Heart right ventricle (tissue), 16 donors: ENCODE measurements at regions of chr2 and their contacts with region 1.

Region 1: GRCh38 chr2:219218732-219219701 is at the start of gene ABCB6:
- DNase-seq: peak; percentile 97 to 98
- ATAC-seq: peak; percentile 90 to 93 (median 92)
- H3K4me3 ChIP-seq: peak within 1 kb of the TSS; percentile 30 to 75 (median 64)
- H3K27ac ChIP-seq: peak within 1 kb of the TSS; percentile 72 to 95 (median 90)
- H3K4me1 ChIP-seq: peaks cover 12 to 40% (median 34%) of the 10 kb centered on the region in 9 donors
- H3K27me3 ChIP-seq: no peaks in the 10 kb centered on the region
- CTCF ChIP-seq: no peak
- total RNA-seq, gene ABCB6: 9.8 to 31.0 (median 14.8) TPM

Region 2: DNA sequence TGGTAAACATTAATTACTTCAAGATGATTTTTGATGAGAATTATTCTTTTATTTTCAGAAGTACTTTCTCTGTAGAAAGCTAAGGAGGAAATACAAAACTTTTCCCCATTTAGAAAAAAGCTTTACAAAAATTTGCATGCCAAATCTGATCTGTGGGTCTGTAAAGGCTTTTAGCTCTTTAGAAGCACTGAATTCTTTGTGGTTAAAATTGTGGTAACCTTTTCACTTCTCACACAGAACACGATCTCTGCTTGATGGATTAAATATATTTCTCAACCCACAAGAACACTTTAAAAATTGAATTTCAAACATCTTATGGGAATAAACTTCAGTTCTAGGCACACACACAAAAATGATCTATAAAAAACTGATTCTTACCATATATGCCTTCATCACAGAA is 736.4 kb before region 1 on chr2:
- intact Hi-C with region 1: no loop called
- DNase-seq: no peak
- ATAC-seq: no peak
- H3K4me3 ChIP-seq: no peak overlapping the region
- H3K27ac ChIP-seq: no peak overlapping the region
- H3K4me1 ChIP-seq: no peaks in the 10 kb centered on the region
- H3K27me3 ChIP-seq: no peaks in the 10 kb centered on the region
- CTCF ChIP-seq: no peak

Region 3: GRCh38 chr2:219160186-219161017 is 58.6 kb before region 1 on chr2 and contains the start of gene NHEJ1:
- intact Hi-C with region 1: loop called in 1 of 10 experiments (anchors 5 kb)
- DNase-seq: peak; percentile 97 to 98
- ATAC-seq: peak; percentile 96 to 98 (median 97)
- H3K4me3 ChIP-seq: peak within 1 kb of the TSS; percentile 40 to 74 (median 62)
- H3K27ac ChIP-seq: peak within 1 kb of the TSS; percentile 80 to 94 (median 92)
- H3K4me1 ChIP-seq: peaks cover 0 to 19% (median 11%) of the 10 kb centered on the region in 9 donors
- H3K27me3 ChIP-seq: no peaks in the 10 kb centered on the region
- CTCF ChIP-seq: peak; percentile 99 to 100 (median 99)
- total RNA-seq, gene NHEJ1: 4.7 to 12.0 (median 7.1) TPM

Region 4: DNA sequence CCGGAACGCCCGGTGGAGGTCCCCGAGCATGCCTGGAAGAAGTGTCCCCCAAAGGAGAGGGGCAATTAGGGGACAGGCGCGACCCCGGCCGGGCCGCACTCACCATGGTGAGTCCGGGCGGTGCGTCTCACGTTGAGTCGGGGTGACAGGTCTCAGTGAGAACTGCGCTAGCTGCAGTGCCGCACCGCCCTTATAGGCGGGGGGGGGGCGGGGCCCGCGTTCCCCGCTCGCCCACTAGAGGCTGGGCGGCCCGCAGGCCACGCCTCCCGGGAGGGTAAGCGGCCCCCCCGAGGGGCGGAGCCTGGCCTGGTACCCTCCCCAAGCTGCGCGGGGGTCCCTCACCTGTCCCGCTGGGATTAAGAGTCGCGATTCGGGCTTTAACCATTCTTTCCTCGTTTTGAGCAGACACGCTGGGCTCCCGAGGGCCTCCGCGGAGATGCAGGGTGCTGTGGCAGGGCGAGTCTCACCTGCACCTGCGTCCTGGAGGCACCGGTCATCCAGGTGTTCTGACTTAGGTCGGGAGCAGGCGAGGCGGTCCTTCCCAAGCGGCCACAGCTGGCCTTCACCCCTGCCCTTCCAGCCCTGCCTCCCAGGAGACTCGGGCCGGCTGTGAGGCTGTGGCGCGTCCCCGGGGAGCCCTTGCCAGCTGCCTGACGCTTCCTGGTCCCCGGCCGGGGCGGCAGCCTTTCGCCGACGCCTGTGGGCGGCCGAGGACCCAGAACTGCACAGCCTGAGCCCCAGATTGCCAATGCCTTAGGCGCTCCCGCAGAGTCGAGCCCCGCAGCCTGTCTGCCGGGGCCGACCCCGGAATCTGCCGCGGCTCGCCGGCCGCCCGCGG is 35.0 kb after region 1 on chr2 and contains the start of gene TUBA4A:
- intact Hi-C with region 1: no loop called
- DNase-seq: peak; percentile 83 to 86
- ATAC-seq: peak; percentile 90 to 95 (median 94)
- H3K4me3 ChIP-seq: peak within 1 kb of the TSS; percentile 54 to 95 (median 76)
- H3K27ac ChIP-seq: peak within 1 kb of the TSS in 9 of 10 donors; percentile 6 to 99 (median 84)
- H3K4me1 ChIP-seq: peaks cover 25 to 58% (median 48%) of the 10 kb centered on the region in 9 donors
- H3K27me3 ChIP-seq: peaks cover 0 to 35% (median 5%) of the 10 kb centered on the region in 7 donors
- CTCF ChIP-seq: peak in 2 of 9 donors; percentile 12 to 25
- total RNA-seq, gene TUBA4A: 76.0 to 245 (median 145) TPM